Mammary epithelial cell (primary cell): ENCODE measurements at regions of chr16 and their contacts with region 1.

Region 1: GRCh38 chr16:67993189-67994039 is 5.9 kb downstream of the DPEP2 start:
- DNase-seq: peak; percentile 38
- H3K4me3 ChIP-seq: peak overlapping the region in 1 of 3 experiments; percentile 30
- H3K27ac ChIP-seq: no peak overlapping the region
- H3K4me1 ChIP-seq: peaks cover 8% of the 10 kb centered on the region
- H3K27me3 ChIP-seq: no peaks in the 10 kb centered on the region
- CTCF ChIP-seq: peak; percentile 66 to 94

Region 2: DNA sequence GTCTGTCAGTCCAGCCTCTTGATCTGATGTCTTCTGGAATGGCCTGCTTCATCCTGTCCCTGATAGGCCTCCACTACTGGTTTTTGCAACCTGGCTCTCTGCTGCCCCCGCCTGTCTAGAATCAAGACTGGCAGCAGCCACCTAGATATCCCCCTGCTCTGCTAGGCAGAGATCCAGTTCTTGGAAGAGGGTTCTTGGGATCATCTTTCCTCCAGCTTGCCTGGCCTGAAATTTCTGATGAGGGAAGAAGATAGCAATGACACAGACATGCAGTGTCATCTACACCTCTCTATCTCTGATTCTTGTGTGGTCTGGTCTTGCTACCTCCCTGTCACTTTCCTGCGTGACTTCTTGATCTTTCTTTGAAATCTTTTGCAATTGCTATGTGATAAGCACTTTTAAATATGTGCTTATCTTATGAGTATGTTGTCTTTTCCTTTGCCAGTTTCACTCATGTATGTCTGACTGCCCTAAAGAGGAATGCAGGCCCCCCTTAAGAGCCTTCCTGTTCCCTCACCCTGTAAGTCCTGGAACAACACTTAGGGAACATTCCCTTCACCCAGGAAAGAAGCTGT is 71.5 kb after region 1 on chr16:
- CTCF ChIA-PET with region 1: no interaction called
- dilution Hi-C with region 1: no loop called
- in situ Hi-C with region 1: no loop called
- intact Hi-C with region 1: loop called (anchors 2 kb)
- DNase-seq: peak; percentile 56
- H3K4me3 ChIP-seq: no peak overlapping the region
- H3K27ac ChIP-seq: no peak overlapping the region
- H3K4me1 ChIP-seq: peaks cover 6% of the 10 kb centered on the region
- H3K27me3 ChIP-seq: no peaks in the 10 kb centered on the region
- CTCF ChIP-seq: peak; percentile 88 to 90

Region 3: DNA sequence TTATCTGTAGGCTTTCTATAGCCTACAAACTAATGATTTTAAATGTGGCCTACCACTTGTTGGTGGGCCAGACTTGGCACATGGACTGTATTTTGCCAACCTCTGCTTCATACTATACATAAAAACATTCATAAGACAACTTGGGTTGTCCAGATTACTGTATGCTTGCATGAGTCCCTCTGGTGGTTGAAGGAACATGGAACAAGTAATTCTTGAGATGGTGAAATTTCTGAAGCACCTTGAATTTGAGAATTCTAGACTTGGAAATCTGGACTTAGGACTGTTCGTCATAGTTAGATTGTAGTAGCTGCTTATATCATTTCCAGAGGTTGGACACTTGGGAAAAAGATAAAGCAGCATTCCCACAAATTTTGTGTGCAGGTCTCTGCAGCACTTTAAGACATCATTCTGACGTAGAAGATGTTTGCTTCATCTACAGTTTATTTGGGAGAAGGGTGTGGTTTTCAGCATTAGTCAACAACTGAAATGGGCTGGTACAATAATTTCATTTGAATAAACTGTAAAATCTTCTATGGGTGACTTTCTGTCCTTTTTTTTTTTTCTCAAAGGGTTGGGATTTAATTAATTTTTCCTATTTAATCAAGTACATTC is 122.9 kb after region 1 on chr16:
- CTCF ChIA-PET with region 1: no interaction called
- dilution Hi-C with region 1: no loop called
- in situ Hi-C with region 1: no loop called
- intact Hi-C with region 1: loop called (anchors 1 kb)
- DNase-seq: peak; percentile 20
- H3K4me3 ChIP-seq: no peak overlapping the region
- H3K27ac ChIP-seq: no peak overlapping the region
- H3K4me1 ChIP-seq: no peaks in the 10 kb centered on the region
- H3K27me3 ChIP-seq: no peaks in the 10 kb centered on the region
- CTCF ChIP-seq: peak; percentile 50 to 71